MCF 10A (cell line): ENCODE measurements at regions of chr3 and their contacts with region 1.

Region 1: DNA sequence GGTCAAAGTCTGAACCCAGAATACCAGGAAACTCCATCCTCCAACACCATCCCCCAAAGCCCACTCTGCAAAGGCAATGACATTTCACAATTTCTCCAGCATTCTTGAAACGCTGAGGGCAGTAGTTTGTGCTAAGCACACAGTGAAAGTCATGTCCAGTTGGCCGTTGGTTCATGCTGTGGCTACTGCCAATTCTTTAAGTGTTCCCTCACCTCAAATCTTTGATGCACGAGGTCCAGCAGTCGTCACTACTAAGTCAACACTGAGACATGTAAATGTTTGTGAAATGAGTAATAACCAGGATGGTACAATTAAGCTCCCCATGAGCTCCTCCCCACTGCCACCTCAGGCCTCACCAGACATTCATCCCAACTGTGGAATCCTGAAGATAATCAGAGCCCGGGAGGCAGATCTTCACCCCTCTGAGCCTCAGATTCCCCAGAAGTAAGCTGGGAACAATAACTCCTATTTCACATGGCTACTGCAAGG is 7.0 kb downstream of the SUCLG2 start:
- DNase-seq: peak; percentile 93
- H3K4me3 Mint-ChIP-seq: peak overlapping the region; percentile 41
- H3K27ac Mint-ChIP-seq: peak overlapping the region; percentile 41
- H3K4me1 Mint-ChIP-seq: peaks cover 48% of the 10 kb centered on the region
- H3K27me3 Mint-ChIP-seq: no peaks in the 10 kb centered on the region
- CTCF ChIP-seq: no peak

Region 2: DNA sequence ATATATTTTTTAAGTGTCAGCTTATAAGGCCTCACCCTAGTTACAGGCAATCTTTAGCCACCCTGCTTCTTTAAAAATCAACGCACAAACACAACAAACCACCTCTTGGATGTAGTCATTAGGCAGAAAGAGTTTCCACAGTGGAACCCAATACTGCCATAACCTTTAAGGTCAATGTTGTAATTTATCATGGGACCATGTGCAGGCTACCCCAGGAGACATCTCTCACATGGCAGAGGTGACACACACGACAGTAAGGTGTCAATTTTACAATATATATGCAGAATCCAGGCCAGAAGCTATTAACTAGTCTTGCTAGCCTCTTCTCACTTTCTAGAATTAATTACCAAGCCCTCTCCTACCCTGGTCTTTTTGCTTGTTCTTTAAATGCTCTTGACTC is 1945.2 kb before region 1 on chr3:
- CTCF ChIA-PET with region 1: no interaction called
- POLR2A ChIA-PET with region 1: no interaction called
- intact Hi-C with region 1: no loop called
- DNase-seq: no peak
- H3K4me3 Mint-ChIP-seq: no peak overlapping the region
- H3K27ac Mint-ChIP-seq: no peak overlapping the region
- H3K4me1 Mint-ChIP-seq: no peaks in the 10 kb centered on the region
- H3K27me3 Mint-ChIP-seq: peaks cover 11% of the 10 kb centered on the region
- CTCF ChIP-seq: no peak

Region 3: GRCh38 chr3:66998113-66998903 is 649.1 kb before region 1 on chr3 and contains the start of gene KBTBD8:
- CTCF ChIA-PET with region 1: no interaction called
- POLR2A ChIA-PET with region 1: no interaction called
- intact Hi-C with region 1: loop called (anchors 5 kb)
- DNase-seq: peak; percentile 99
- H3K4me3 Mint-ChIP-seq: peak within 1 kb of the TSS; percentile 80
- H3K27ac Mint-ChIP-seq: peak within 1 kb of the TSS; percentile 44
- H3K4me1 Mint-ChIP-seq: peaks cover 7% of the 10 kb centered on the region
- H3K27me3 Mint-ChIP-seq: peaks cover 17% of the 10 kb centered on the region
- CTCF ChIP-seq: no peak
- total RNA-seq, gene KBTBD8: 1.7 and 4.3 TPM in 2 replicates

Region 4: DNA sequence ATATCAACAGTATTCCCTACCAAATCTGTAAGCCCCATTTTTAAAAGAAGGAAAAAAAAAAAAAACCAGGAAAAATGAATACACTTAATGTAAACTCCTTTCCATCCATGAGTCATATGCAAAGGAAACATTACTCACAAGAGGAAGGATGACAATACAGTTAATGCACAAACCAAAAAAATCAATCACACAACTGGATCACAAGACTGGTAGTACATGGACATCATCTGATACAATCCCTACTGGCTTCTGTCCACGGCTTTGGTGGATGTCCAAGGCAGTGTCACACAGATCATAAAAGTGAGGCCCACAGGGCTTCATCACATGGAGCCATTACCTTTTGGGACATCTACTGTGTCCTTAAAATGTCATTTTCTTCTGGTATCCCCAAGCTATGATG is 37.0 kb before region 1 on chr3:
- CTCF ChIA-PET with region 1: no interaction called
- POLR2A ChIA-PET with region 1: interaction called, 3 read pairs
- intact Hi-C with region 1: loop called (anchors 5 kb)
- DNase-seq: peak; percentile 46
- H3K4me3 Mint-ChIP-seq: no peak overlapping the region
- H3K27ac Mint-ChIP-seq: no peak overlapping the region
- H3K4me1 Mint-ChIP-seq: peaks cover 4% of the 10 kb centered on the region
- H3K27me3 Mint-ChIP-seq: no peaks in the 10 kb centered on the region
- CTCF ChIP-seq: no peak

Region 5: DNA sequence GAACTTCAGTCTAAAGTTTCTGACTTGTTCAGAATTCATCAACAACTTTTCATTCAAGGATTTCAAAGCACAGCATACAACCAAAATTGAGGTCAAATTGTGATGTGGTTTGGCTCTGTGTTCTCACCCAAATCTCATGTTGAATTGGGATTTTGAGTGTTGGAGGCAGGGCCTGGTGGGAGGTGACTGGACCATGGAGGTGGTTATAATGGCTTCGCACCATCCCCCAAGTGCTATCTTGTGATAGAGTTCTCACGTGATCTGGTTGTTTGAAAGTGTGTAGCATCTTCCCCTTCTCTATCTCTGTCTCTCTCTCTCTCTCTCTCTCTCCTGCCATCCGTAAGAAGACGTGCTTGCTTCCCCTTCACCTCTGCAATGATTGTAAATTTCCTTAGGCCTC is 26.6 kb after region 1 on chr3:
- CTCF ChIA-PET with region 1: no interaction called
- POLR2A ChIA-PET with region 1: no interaction called
- intact Hi-C with region 1: no loop called
- DNase-seq: no peak
- H3K4me3 Mint-ChIP-seq: no peak overlapping the region
- H3K27ac Mint-ChIP-seq: no peak overlapping the region
- H3K4me1 Mint-ChIP-seq: no peaks in the 10 kb centered on the region
- H3K27me3 Mint-ChIP-seq: no peaks in the 10 kb centered on the region
- CTCF ChIP-seq: no peak

Region 6: DNA sequence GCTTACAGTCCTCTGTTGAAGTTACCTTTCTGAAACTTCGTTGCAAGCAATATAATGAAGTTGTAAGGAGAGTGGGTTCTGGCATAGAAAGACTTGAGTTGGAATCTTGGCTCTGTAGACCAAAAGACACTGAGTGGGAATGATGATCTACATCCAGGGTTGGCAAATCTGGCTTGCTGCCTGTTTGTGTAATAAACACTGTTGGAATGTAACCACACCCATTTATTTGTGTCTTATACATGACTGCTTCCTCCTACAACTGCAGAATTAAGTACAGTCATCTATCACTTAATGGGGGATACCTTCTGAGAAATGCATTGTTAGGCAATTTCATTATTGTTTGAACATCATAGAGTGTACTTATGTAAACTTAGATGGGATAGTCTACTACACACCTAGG is 185.4 kb after region 1 on chr3:
- CTCF ChIA-PET with region 1: no interaction called
- POLR2A ChIA-PET with region 1: no interaction called
- intact Hi-C with region 1: no loop called
- DNase-seq: peak; percentile 22
- H3K4me3 Mint-ChIP-seq: no peak overlapping the region
- H3K27ac Mint-ChIP-seq: no peak overlapping the region
- H3K4me1 Mint-ChIP-seq: no peaks in the 10 kb centered on the region
- H3K27me3 Mint-ChIP-seq: peaks cover 17% of the 10 kb centered on the region
- CTCF ChIP-seq: no peak

Region 7: DNA sequence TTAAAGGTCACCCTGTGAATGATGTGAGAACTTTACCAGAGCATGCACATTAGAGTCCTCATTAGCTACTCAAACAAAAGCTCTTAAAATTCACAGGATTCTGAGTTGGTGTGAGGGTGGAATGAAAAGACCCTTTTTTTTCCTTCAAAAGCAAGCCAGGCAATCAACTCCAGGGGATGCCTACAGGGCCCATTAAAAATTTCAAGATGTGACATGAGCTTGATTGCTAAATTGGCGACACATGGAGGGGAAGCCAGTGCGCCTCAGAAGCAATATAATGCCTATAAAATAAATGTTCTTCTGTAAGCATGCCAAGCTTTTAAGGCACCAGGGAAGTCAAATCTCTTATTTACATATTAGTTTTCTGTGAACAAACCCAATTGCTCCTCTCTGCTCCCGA is 335.7 kb after region 1 on chr3:
- CTCF ChIA-PET with region 1: no interaction called
- POLR2A ChIA-PET with region 1: no interaction called
- intact Hi-C with region 1: no loop called
- DNase-seq: no peak
- H3K4me3 Mint-ChIP-seq: no peak overlapping the region
- H3K27ac Mint-ChIP-seq: no peak overlapping the region
- H3K4me1 Mint-ChIP-seq: no peaks in the 10 kb centered on the region
- H3K27me3 Mint-ChIP-seq: peaks cover 4% of the 10 kb centered on the region
- CTCF ChIP-seq: no peak